ENCODE measurements at regions of chr22 and their contacts with region 1.

Region 1: DNA sequence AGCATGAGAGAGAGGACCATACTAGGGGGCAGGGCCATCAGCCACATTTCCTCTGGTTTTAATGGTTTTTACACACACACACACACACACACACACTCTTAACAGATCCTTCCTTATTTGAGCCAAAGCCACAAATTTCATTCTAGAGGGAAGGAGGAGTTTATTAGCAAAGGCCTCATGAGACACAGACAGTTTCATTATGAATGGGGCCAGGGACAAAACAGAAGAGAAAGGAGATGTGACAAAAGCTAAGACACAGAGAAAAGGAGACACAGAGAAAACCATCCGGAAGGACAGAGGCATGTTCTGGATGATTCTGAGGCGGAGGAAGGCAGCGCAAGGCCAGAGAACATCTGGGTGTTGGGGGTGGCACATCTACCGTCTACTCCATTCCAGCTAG is 32.2 kb upstream of the ARFGAP3 start:
- DNase-seq: no peak
- H3K4me3 ChIP-seq: no peak overlapping the region
- H3K27ac ChIP-seq: no peak overlapping the region
- H3K4me1 ChIP-seq: no peaks in the 10 kb centered on the region
- H3K27me3 ChIP-seq: no peaks in the 10 kb centered on the region
- CTCF ChIP-seq: no peak

Region 2: DNA sequence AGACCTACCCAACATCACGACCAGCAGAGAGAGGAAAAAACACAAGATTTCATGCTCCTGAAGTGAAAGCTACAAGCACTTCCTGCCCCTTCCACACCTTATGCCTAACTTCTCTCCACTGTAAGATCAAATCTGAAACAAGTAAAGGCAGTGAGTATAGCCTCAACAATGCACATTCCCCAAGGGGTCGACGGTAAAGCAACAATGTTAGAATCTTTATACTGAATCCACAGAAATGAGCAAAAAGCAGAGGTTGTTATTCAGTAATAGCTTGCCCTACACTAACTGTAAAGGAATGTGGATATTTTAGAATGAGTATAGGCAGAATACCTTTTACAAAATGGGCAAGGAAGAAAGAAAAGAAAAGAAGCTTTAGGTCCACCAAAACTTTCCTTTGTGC is 47.9 kb before region 1 on chr22:
- CTCF ChIA-PET with region 1: interaction called, 13 read pairs
- POLR2A ChIA-PET with region 1: no interaction called
- intact Hi-C with region 1: no loop called
- DNase-seq: no peak
- H3K4me3 ChIP-seq: no peak overlapping the region
- H3K27ac ChIP-seq: no peak overlapping the region
- H3K4me1 ChIP-seq: peaks cover 30% of the 10 kb centered on the region
- H3K27me3 ChIP-seq: no peaks in the 10 kb centered on the region
- CTCF ChIP-seq: no peak

Measured in PC-9 (cell line).